Vagina (tissue), 2 donors: ENCODE measurements at regions of chr10 and their contacts with region 1.

Region 1: GRCh38 chr10:29998142-29998808 is 61.1 kb downstream of the JCAD start:
- DNase-seq: no peak
- H3K4me3 ChIP-seq: no peak overlapping the region
- H3K27ac ChIP-seq: no peak overlapping the region
- H3K4me1 ChIP-seq: peaks cover 18% of the 10 kb centered on the region
- H3K27me3 ChIP-seq: no peaks in the 10 kb centered on the region
- CTCF ChIP-seq: peak; percentile 68 to 94 (median 91)
- POLR2A ChIP-seq: no peak

Region 2: GRCh38 chr10:30219971-30220751 is 221.9 kb after region 1 on chr10:
- intact Hi-C with region 1: loop called (anchors 10 kb)
- DNase-seq: no peak
- H3K4me3 ChIP-seq: no peak overlapping the region
- H3K27ac ChIP-seq: no peak overlapping the region
- H3K4me1 ChIP-seq: no peaks in the 10 kb centered on the region
- H3K27me3 ChIP-seq: no peaks in the 10 kb centered on the region
- CTCF ChIP-seq: no peak
- POLR2A ChIP-seq: no peak

Region 3: GRCh38 chr10:30241422-30242110 is 243.3 kb after region 1 on chr10:
- intact Hi-C with region 1: loop called (anchors 5 kb)
- DNase-seq: no peak
- H3K4me3 ChIP-seq: no peak overlapping the region
- H3K27ac ChIP-seq: no peak overlapping the region
- H3K4me1 ChIP-seq: no peaks in the 10 kb centered on the region
- H3K27me3 ChIP-seq: no peaks in the 10 kb centered on the region
- CTCF ChIP-seq: no peak
- POLR2A ChIP-seq: no peak